A673 (cell line): ENCODE measurements at regions of chrX and their contacts with region 1.

Region 1: DNA sequence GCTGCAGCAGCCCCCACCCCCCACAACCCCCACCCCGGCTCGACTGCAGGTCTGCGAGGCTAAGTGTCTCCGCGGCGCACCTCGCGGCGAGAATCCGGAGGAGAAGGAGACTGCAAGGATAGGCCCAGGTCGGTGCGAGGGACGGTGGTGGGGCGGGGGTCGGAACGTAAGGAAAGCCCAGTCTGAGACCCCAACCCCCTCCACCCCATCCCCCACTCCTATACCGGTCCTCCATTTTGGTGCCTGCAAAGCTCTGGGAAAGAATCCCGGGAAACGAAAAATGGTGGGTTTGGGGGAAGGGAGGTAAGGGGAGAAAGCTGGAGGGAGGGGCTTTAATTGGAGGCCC is 614 bp downstream of the BEX3 start:
- DNase-seq: peak; percentile 43
- H3K4me3 ChIP-seq: peak overlapping the region; percentile 64
- H3K27ac ChIP-seq: peak overlapping the region; percentile 86
- H3K4me1 ChIP-seq: peaks cover 4% of the 10 kb centered on the region
- H3K27me3 ChIP-seq: no peaks in the 10 kb centered on the region
- CTCF ChIP-seq: no peak

Region 2: GRCh38 chrX:103066606-103067005 is 310.3 kb before region 1 on chrX:
- CTCF ChIA-PET with region 1: no interaction called
- POLR2A ChIA-PET with region 1: no interaction called
- intact Hi-C with region 1: no loop called
- DNase-seq: no peak
- H3K4me3 ChIP-seq: no peak overlapping the region
- H3K27ac ChIP-seq: no peak overlapping the region
- H3K4me1 ChIP-seq: no peaks in the 10 kb centered on the region
- H3K27me3 ChIP-seq: no peaks in the 10 kb centered on the region
- CTCF ChIP-seq: no peak

Region 3: DNA sequence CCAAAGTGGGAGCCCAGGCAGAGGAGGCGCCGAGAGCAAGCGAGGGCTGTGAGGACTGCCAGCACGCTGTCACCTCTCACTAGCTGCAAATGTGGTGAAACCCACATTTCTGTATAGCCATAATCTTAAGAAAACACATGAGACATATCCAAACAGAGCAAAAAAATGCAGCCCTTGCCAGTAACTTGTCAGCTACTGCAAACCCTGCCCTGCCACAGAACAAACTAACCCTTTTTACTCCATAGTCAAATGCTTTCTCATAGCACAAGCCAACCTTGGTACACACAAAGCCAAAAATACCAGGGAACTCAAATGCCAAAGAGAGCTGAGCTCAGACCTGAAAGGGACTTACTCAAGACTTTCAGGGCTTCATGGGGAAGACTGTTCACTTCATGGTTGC is 269.1 kb before region 1 on chrX:
- CTCF ChIA-PET with region 1: no interaction called
- POLR2A ChIA-PET with region 1: interaction called, 10 read pairs
- intact Hi-C with region 1: no loop called
- DNase-seq: no peak
- H3K4me3 ChIP-seq: no peak overlapping the region
- H3K27ac ChIP-seq: no peak overlapping the region
- H3K4me1 ChIP-seq: no peaks in the 10 kb centered on the region
- H3K27me3 ChIP-seq: no peaks in the 10 kb centered on the region
- CTCF ChIP-seq: no peak

Region 4: GRCh38 chrX:103475381-103475780 is 98.4 kb after region 1 on chrX:
- CTCF ChIA-PET with region 1: interaction called, 10 read pairs
- POLR2A ChIA-PET with region 1: no interaction called
- intact Hi-C with region 1: no loop called
- DNase-seq: no peak
- H3K4me3 ChIP-seq: no peak overlapping the region
- H3K27ac ChIP-seq: no peak overlapping the region
- H3K4me1 ChIP-seq: no peaks in the 10 kb centered on the region
- H3K27me3 ChIP-seq: no peaks in the 10 kb centered on the region
- CTCF ChIP-seq: no peak